ENCODE measurements at regions of chr10 and their contacts with region 1.

Region 1: DNA sequence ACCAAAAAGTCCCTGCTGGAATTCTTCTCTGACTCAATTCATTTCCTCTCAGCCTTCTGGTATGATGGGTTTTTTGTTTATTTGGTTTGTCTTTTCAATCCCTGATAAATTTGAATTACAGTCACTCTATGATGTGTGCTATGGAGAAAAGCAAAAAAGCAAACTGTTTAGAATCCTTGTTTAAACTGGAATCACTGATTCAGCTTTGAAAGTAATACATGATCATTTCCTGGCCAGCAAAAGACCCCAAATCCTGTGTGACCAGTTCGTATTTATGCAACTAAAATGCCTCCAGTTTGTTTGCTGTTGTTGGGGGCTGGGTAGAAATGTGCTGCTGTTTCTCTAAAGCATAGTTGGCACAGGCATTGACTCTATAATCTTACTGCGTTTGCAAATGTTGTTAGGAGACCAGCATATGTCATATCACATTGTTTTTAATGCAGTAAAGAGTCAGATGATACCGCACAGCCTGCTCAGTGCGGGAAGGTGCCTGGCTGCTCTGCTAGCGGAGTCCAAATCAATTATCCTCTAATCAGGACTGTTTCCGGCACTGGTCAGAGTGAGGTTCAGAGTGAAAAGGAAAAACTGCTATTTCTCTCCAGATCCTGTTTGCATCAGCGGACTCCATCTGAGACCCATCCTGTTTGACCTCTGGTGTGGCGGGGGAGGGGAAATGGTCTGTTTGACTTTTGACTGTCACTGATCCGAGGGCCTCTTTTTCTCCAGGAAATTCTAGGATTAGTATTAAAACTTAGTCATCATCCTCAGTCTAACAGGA is 40.6 kb upstream of the ADD3 start:
- DNase-seq: peak; percentile 50
- H3K4me3 ChIP-seq: peak overlapping the region; percentile 33
- H3K27ac ChIP-seq: peak overlapping the region; percentile 87
- H3K27me3 ChIP-seq: no peaks in the 10 kb centered on the region
- CTCF ChIP-seq: no peak

Region 2: GRCh38 chr10:109978481-109978880 is 11.3 kb after region 1 on chr10:
- CTCF ChIA-PET with region 1: interaction called, 11 read pairs
- POLR2A ChIA-PET with region 1: no interaction called
- DNase-seq: no peak
- H3K4me3 ChIP-seq: no peak overlapping the region
- H3K27ac ChIP-seq: no peak overlapping the region
- H3K27me3 ChIP-seq: no peaks in the 10 kb centered on the region
- CTCF ChIP-seq: peak; percentile 61

Region 3: DNA sequence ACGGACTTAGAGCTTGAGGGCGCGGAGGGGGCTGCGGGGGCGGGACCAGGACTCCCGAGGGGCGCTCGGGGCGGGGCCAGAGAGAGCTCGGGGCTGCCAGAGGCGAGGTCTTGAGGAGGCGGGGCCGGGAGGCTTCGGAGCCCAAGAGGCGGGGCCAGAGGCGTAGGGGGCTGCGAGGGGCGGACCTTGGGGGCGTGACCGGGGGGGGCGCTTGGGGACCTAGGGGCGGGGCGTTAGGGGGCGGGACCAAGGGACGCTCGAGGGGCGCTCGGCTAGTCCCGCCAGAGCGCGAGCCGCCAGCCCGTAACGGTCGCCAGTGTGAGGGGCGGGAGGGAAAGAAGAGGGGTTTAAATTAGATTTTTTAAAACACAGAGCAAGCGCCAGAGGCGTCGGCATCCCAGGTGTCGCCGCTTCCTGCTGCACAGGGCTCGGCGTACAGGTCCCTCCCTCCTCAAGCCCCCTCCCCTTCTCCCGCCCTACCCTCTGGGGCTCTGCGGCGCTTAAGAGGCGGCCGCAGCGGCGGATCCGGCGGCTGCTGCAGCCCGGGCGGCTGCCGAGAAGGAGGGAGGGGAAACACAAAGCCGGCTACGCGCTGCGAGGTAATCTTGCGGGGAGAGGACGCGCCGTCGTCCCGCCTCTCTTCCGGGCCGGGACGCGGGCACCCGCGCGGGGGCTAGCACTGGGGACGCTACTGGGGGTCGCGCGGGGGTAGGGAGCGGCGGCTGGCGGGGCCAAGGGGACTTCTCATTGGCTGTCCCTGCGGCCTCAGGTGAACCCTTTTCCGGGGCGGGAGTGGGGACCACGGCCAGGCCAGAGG is 40.8 kb after region 1 on chr10 and contains the start of gene ADD3:
- CTCF ChIA-PET with region 1: no interaction called
- POLR2A ChIA-PET with region 1: interaction called, 12 read pairs
- DNase-seq: peak; percentile 86
- H3K4me3 ChIP-seq: peak within 1 kb of the TSS; percentile 77
- H3K27ac ChIP-seq: peak within 1 kb of the TSS; percentile 83
- H3K27me3 ChIP-seq: no peaks in the 10 kb centered on the region
- CTCF ChIP-seq: no peak
- polyA plus RNA-seq, gene ADD3: 161 and 192 TPM in 2 replicates

Region 4: DNA sequence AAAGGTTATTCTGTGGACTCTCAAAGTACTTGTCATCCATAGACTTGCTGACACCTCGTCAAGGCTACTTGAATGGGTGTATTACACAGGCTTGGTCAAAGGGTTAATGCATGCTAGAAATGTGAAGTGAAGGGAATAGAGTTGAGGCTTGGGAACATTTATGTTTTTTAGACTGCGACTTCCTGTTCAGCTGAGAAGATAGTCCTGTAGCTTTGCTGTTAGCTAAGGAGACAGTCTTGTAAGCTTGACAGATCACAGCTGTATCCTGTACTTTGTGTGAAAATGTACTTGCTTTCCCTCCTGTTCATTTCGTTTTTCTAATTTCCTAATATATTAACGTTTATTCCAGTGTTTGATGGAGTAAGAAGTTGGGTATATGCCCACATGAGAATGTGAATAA is 92.8 kb after region 1 on chr10:
- CTCF ChIA-PET with region 1: no interaction called
- POLR2A ChIA-PET with region 1: no interaction called
- DNase-seq: no peak
- H3K4me3 ChIP-seq: no peak overlapping the region
- H3K27ac ChIP-seq: no peak overlapping the region
- H3K27me3 ChIP-seq: no peaks in the 10 kb centered on the region
- CTCF ChIP-seq: no peak

Measured in AG04450 (cell line).